ENCODE measurements at regions of chr1 and their contacts with region 1.

Region 1: GRCh38 chr1:206925106-206925736 is 3.5 kb upstream of the FCMR start:
- DNase-seq: peak in 3 of 9 donors; percentile 25 to 38 (median 37)
- ATAC-seq: peak; percentile 62
- H3K4me3 ChIP-seq: no peak overlapping the region
- H3K4me3 Mint-ChIP-seq: no peak overlapping the region
- H3K27ac ChIP-seq: peak overlapping the region; percentile 90
- H3K27ac Mint-ChIP-seq: no peak overlapping the region
- H3K4me1 ChIP-seq: peaks cover 46 to 51% of the 10 kb centered on the region in 2 donors
- H3K4me1 Mint-ChIP-seq: peaks cover 19 to 37% (median 31%) of the 10 kb centered on the region in 7 donors
- H3K27me3 ChIP-seq: no peaks in the 10 kb centered on the region
- H3K27me3 Mint-ChIP-seq: no peaks in the 10 kb centered on the region

Region 2: DNA sequence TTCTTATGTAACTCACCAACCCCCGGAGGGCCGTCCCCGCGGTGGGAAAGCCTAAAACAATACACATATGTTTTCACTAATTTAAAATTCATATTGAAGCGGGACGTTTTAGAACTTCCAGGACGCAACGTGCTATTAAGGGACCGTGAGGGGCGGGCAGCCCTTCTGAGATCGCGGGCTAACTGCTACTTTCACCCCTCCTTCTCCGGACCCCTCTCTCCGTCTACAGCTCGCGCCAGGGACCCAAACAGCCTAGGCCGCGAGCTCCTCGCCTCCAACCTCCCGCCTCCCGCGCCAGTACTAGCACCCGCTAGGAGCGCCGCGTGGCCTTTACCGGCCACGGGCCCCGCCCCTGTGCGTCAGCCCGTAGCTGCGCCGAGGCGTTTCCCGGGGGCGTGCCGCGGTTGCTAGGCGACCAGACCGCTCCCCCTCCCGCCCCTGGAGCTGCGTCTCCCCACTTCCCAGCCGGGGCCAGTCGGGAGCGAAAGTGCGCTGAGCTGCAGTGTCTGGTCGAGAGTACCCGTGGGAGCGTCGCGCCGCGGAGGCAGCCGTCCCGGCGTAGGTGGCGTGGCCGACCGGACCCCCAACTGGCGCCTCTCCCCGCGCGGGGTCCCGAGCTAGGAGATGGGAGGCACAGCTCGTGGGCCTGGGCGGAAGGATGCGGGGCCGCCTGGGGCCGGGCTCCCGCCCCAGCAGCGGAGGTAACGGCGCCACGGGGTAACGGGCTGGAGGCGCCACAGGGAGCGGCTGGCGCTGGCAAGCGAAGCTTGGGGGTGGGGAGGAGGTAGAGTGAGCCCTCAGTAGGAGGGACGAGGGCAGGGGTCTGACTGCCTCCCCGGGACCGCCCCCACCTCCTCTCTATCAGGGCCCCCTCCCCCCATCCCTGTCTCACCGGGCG is 289.9 kb before region 1 on chr1 and contains the start of gene DYRK3:
- CTCF ChIA-PET with region 1: no interaction called
- POLR2A ChIA-PET with region 1: interaction called, 4 read pairs
- intact Hi-C with region 1: loop called (anchors 2 to 5 kb)
- DNase-seq: peak; percentile 71 to 98 (median 80)
- ATAC-seq: peak; percentile 97
- H3K4me3 ChIP-seq: peak within 1 kb of the TSS; percentile 67
- H3K4me3 Mint-ChIP-seq: peak within 1 kb of the TSS; percentile 85 to 96 (median 90)
- H3K27ac ChIP-seq: peak within 1 kb of the TSS; percentile 57
- H3K27ac Mint-ChIP-seq: peak within 1 kb of the TSS; percentile 64 to 93 (median 85)
- H3K4me1 ChIP-seq: peaks cover 8 to 16% of the 10 kb centered on the region in 2 donors
- H3K4me1 Mint-ChIP-seq: peaks cover 14 to 29% (median 18%) of the 10 kb centered on the region in 7 donors
- H3K27me3 ChIP-seq: no peaks in the 10 kb centered on the region
- H3K27me3 Mint-ChIP-seq: peaks cover 7 to 13% (median 9%) of the 10 kb centered on the region in 5 donors
- total RNA-seq, gene DYRK3: 0.22 to 8.2 (median 0.69) TPM

Region 3: DNA sequence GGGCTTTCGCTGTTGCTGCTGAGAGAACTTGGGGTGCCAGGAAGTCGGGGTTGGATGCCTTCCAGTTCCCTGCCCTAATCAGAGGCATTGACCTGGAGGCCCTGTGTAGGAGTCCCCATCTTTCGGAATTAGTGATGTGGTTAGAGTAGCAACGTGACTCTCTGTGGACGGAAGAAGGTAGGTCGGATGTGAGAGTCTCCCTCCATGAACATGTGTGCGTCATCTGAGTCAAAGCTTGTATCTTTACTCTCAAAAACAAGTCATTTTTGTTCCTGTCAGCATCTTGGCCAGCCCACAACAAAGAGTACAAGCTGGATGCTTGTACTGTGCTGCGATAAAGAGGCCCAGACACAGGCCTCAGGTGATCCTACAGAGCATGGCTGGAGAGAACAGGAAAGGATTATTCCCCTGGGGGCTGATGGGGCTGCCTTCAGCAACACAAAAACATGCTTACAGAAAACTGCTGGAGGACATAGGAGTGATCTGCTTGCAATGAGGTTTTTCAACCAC is 121.9 kb before region 1 on chr1:
- CTCF ChIA-PET with region 1: interaction called, 20 read pairs
- POLR2A ChIA-PET with region 1: interaction called, 22 read pairs
- intact Hi-C with region 1: loop called in 1 of 2 experiments (anchors 5 kb)
- DNase-seq: peak; percentile 42 to 96 (median 93)
- ATAC-seq: peak; percentile 97
- H3K4me3 ChIP-seq: no peak overlapping the region
- H3K4me3 Mint-ChIP-seq: peak overlapping the region in 9 of 10 donors; percentile 32 to 71 (median 57)
- H3K27ac ChIP-seq: peak overlapping the region; percentile 81
- H3K27ac Mint-ChIP-seq: peak overlapping the region; percentile 83 to 99 (median 95)
- H3K4me1 ChIP-seq: peaks cover 34 to 41% of the 10 kb centered on the region in 2 donors
- H3K4me1 Mint-ChIP-seq: peaks cover 29 to 78% (median 77%) of the 10 kb centered on the region in 7 donors
- H3K27me3 ChIP-seq: no peaks in the 10 kb centered on the region
- H3K27me3 Mint-ChIP-seq: peaks cover 0 to 44% (median 0%) of the 10 kb centered on the region in 5 donors

Region 4: GRCh38 chr1:206856674-206857464 is 68.4 kb before region 1 on chr1:
- CTCF ChIA-PET with region 1: interaction called, 3 read pairs
- POLR2A ChIA-PET with region 1: interaction called, 10 read pairs
- intact Hi-C with region 1: no loop called
- DNase-seq: peak in 5 of 9 donors; percentile 19 to 32 (median 28)
- ATAC-seq: peak; percentile 54
- H3K4me3 ChIP-seq: no peak overlapping the region
- H3K4me3 Mint-ChIP-seq: no peak overlapping the region
- H3K27ac ChIP-seq: no peak overlapping the region
- H3K27ac Mint-ChIP-seq: peak overlapping the region in 1 of 9 donors; percentile 55
- H3K4me1 ChIP-seq: peaks cover 0 to 15% of the 10 kb centered on the region in 2 donors
- H3K4me1 Mint-ChIP-seq: peaks cover 7 to 31% (median 24%) of the 10 kb centered on the region in 7 donors
- H3K27me3 ChIP-seq: no peaks in the 10 kb centered on the region
- H3K27me3 Mint-ChIP-seq: peaks cover 0 to 32% (median 0%) of the 10 kb centered on the region in 5 donors

Region 5: DNA sequence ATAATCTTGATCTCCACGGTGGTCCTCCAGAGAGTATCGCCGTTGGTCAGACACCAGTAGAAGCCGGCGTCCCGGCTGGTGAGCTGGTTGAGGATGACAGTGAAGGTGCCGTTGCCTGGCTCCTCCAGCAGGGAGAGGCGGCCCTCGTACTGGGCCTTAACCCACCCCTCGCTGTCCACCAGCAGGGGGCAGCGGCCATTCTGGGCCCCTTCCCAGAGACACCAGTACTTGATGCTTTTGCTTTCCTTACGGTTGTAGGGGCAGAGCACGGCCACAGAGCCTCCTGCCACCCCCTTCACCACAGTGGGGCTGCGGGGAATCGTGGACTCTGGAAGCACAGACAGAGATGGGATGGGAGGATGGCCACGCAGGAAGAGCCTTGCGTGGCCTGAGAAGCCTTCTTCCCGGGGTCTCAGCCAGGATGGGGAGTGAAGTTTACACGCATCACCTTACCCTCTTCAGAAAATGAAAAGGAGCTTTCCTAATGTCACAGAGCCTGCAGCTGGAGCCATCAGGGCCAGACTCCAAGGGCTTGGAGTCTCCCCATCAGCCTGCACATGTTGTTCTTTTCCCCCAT is 10.4 kb after region 1 on chr1:
- CTCF ChIA-PET with region 1: interaction called, 343 read pairs
- POLR2A ChIA-PET with region 1: interaction called, 323 read pairs
- intact Hi-C with region 1: loop called (anchors 1 kb)
- DNase-seq: peak in 4 of 9 donors; percentile 28 to 56 (median 48)
- ATAC-seq: peak; percentile 68
- H3K4me3 ChIP-seq: no peak overlapping the region
- H3K4me3 Mint-ChIP-seq: no peak overlapping the region
- H3K27ac ChIP-seq: no peak overlapping the region
- H3K27ac Mint-ChIP-seq: peak overlapping the region in 1 of 9 donors; percentile 12
- H3K4me1 ChIP-seq: peaks cover 6 to 12% of the 10 kb centered on the region in 2 donors
- H3K4me1 Mint-ChIP-seq: peaks cover 2 to 31% (median 29%) of the 10 kb centered on the region in 7 donors
- H3K27me3 ChIP-seq: no peaks in the 10 kb centered on the region
- H3K27me3 Mint-ChIP-seq: peaks cover 0 to 8% (median 0%) of the 10 kb centered on the region in 5 donors

Region 6: DNA sequence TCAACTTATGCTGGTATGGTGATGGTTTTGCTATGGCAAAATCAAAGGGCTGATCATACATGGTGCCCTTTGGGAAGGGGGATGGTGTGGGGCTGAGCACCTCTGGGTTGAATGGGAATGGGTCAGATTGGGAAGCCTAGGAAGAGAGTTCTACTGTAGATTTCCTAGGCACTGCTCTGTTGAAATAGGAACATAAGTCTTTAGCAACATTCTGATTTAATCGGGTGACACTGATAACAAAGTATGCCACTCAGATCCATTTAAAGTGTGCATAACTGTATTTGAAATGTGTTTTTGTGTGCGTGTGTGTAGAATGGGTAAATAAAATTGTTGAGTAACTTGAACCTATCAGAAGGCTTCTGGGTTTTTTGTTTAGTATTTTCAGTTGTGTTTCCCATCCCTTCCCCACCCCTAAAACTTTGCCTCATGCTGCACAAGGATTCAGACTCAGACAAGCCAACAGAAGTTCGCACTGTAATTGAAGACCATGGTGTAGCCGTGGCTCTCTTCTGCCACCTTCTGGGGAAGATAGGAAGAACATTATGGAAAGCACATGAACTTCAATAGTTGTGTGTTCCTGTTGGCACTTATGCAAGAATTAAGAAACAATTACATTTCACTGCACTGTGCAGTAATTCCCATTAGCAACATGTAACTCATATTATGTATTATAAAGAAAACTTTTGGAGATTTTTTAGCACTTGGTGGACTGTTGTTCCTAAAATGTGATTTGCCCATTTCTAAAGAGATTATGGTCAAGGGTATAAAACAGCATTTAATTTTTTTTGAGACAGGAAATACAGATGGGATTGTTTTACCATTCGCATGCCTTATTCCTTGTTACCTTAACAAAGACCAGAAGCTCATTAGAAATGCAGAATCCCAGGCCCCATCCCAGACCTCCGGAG is 152.5 kb after region 1 on chr1:
- CTCF ChIA-PET with region 1: no interaction called
- POLR2A ChIA-PET with region 1: no interaction called
- intact Hi-C with region 1: loop called in 1 of 2 experiments (anchors 5 kb)
- DNase-seq: peak; percentile 21 to 85 (median 78)
- ATAC-seq: peak; percentile 98
- H3K4me3 ChIP-seq: no peak overlapping the region
- H3K4me3 Mint-ChIP-seq: no peak overlapping the region
- H3K27ac ChIP-seq: no peak overlapping the region
- H3K27ac Mint-ChIP-seq: peak overlapping the region in 3 of 9 donors; percentile 5 to 63 (median 28)
- H3K4me1 ChIP-seq: no peaks in the 10 kb centered on the region
- H3K4me1 Mint-ChIP-seq: peaks cover 0 to 14% (median 5%) of the 10 kb centered on the region in 7 donors
- H3K27me3 ChIP-seq: no peaks in the 10 kb centered on the region
- H3K27me3 Mint-ChIP-seq: peaks cover 0 to 52% (median 0%) of the 10 kb centered on the region in 5 donors

Region 7: GRCh38 chr1:207134581-207134980 is 209.4 kb after region 1 on chr1:
- CTCF ChIA-PET with region 1: no interaction called
- POLR2A ChIA-PET with region 1: no interaction called
- intact Hi-C with region 1: no loop called
- DNase-seq: no peak
- ATAC-seq: peak; percentile 29
- H3K4me3 ChIP-seq: no peak overlapping the region
- H3K4me3 Mint-ChIP-seq: no peak overlapping the region
- H3K27ac ChIP-seq: no peak overlapping the region
- H3K27ac Mint-ChIP-seq: no peak overlapping the region
- H3K4me1 ChIP-seq: no peaks in the 10 kb centered on the region
- H3K4me1 Mint-ChIP-seq: no peaks in the 10 kb centered on the region
- H3K27me3 ChIP-seq: no peaks in the 10 kb centered on the region
- H3K27me3 Mint-ChIP-seq: peaks cover 0 to 3% (median 0%) of the 10 kb centered on the region in 5 donors

Region 8: DNA sequence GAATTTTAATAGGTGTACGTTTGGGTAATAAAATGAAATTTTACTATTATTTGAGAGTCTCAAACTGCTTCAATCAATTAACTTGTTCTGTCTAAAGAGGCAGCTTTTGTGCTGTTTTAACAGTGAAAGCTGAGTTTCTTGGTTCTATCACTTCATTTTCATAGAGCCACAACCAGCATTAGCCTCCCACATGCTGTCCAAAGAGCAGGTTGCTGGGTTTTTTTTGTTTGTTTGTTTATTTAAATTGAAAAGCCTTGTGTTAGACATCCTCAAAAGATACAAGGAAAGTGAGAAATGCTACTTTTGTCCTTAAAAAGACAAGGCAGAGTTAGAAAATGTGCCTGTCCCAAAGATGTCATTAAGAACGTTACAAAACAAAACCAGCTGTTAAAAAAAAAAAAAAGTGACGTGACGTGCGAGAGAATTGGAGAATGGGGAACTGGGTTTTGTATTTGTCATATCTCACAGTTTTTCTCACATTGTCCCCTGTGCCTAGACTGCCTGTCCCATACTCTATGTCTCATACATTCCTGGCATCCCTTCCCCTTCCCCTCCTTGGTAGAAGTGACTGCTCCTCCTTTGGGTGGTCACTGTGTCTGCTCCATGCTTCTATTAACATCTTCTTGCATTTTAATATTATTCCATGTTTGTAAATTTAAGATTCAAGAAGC is 1048.8 kb after region 1 on chr1:
- CTCF ChIA-PET with region 1: no interaction called
- POLR2A ChIA-PET with region 1: no interaction called
- intact Hi-C with region 1: no loop called
- DNase-seq: no peak
- ATAC-seq: peak; percentile 58
- H3K4me3 ChIP-seq: no peak overlapping the region
- H3K4me3 Mint-ChIP-seq: peak overlapping the region in 1 of 10 donors; percentile 18
- H3K27ac ChIP-seq: no peak overlapping the region
- H3K27ac Mint-ChIP-seq: no peak overlapping the region
- H3K4me1 ChIP-seq: no peaks in the 10 kb centered on the region
- H3K4me1 Mint-ChIP-seq: peaks cover 0 to 1% (median 0%) of the 10 kb centered on the region in 7 donors
- H3K27me3 ChIP-seq: no peaks in the 10 kb centered on the region
- H3K27me3 Mint-ChIP-seq: peaks cover 17 to 52% (median 30%) of the 10 kb centered on the region in 5 donors